ENCODE measurements at regions of chr4 and their contacts with region 1.

Region 1: GRCh38 chr4:182143822-182144625 is 99.2 kb upstream of the TENM3 start:
- DNase-seq: no peak
- H3K4me3 ChIP-seq: peak overlapping the region; percentile 59 to 84 (median 78)
- H3K27ac ChIP-seq: peak overlapping the region; percentile 60 to 73 (median 65)
- H3K4me1 ChIP-seq: peaks cover 2 to 23% (median 21%) of the 10 kb centered on the region in 4 donors
- H3K27me3 ChIP-seq: peaks cover 0 to 47% (median 39%) of the 10 kb centered on the region in 3 donors
- CTCF ChIP-seq: no peak
- EP300 ChIP-seq: no peak
- POLR2A ChIP-seq: no peak

Region 2: DNA sequence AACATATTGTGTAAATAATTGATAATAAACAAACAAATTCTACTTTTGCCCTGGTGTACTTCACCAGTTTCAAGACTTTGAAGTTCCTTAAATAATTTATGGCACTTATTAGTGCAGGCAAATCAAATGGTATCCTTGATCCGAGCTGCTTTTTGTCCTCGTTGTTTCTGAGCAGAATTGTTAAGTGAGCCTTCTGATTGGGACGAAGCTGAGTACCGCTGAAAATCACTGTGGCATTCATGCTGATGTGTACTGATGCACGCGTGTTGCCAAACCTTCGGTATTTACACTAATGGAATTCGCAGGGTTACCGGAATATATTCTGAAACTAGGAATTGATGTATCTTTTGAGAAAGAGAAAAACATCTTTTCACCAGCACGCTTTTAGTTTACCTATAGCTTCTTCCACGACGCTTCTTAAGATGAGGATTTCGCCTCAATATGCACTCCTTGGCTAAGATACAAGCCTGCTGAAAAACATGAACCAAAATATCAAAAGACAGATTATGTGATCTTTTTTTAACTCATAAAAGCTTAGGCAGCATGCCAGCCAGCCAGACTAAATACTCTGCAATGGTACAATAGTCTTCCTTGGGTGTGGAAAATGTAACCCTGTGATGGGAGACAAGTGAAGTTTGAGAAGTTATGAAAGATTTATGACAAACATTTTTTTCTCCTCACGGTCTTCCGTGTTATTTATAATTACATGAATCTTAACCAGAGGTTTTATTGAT is 50.2 kb after region 1 on chr4:
- intact Hi-C with region 1: no loop called
- DNase-seq: no peak
- H3K4me3 ChIP-seq: no peak overlapping the region
- H3K27ac ChIP-seq: no peak overlapping the region
- H3K4me1 ChIP-seq: no peaks in the 10 kb centered on the region
- H3K27me3 ChIP-seq: no peaks in the 10 kb centered on the region
- CTCF ChIP-seq: no peak
- EP300 ChIP-seq: no peak
- POLR2A ChIP-seq: no peak

Region 3: GRCh38 chr4:182207830-182208396 is 63.9 kb after region 1 on chr4:
- intact Hi-C with region 1: loop called (anchors 10 kb)
- DNase-seq: no peak
- H3K4me3 ChIP-seq: no peak overlapping the region
- H3K27ac ChIP-seq: peak overlapping the region; percentile 30 to 75 (median 68)
- H3K4me1 ChIP-seq: peaks cover 0 to 24% (median 15%) of the 10 kb centered on the region in 4 donors
- H3K27me3 ChIP-seq: no peaks in the 10 kb centered on the region
- CTCF ChIP-seq: no peak
- EP300 ChIP-seq: peak in 1 of 4 donors; percentile 34
- POLR2A ChIP-seq: no peak

Region 4: DNA sequence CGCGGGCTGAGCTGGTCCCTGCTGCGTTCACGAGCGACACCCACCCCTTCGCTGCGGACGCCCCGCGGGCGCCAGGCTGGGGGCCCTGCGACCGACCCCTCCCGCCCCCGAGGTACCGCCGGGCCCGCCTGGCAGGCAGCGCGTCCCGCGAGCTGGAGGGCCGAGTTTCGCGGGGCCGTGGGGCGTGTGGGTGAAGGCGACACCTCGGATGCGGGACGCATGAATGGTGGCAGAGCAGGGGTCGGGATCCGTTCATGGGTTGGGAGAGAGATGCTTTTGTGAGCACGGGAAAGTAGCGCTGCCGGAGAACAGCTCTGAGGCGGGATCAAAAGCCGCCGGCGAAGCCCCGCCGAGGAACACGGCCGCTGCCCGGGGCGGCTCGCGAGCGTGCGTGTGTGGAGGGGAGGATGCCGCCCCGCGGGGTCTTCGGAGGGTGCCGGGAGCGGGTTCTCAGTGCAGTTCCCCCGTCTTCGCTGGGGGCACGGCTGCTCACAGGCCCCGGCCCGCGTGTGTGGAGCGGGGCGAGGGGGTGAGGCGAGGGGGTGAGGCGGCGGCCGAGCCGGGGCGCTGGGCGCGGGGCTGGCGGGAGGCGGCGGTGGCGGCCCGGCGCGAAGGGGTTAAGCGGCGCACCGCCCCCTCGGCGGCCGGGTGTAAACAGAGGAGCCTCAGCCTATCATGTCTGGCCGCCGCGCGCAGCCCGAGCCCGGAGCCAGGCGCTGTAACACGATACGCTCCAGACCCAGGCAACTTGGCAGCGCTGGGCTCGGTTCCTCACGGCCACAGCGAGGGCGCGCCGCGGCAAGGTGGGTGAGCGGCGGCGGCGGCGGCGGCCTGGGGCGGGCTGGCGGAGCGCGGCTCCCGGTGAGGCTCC is 304.5 kb after region 1 on chr4:
- intact Hi-C with region 1: loop called (anchors 2 kb)
- DNase-seq: peak; percentile 98
- H3K4me3 ChIP-seq: peak overlapping the region; percentile 65 to 88 (median 76)
- H3K27ac ChIP-seq: peak overlapping the region; percentile 78 to 92 (median 88)
- H3K4me1 ChIP-seq: peaks cover 0 to 36% (median 21%) of the 10 kb centered on the region in 4 donors
- H3K27me3 ChIP-seq: peaks cover 0 to 13% (median 0%) of the 10 kb centered on the region in 3 donors
- CTCF ChIP-seq: no peak
- EP300 ChIP-seq: peak in 1 of 4 donors; percentile 14
- POLR2A ChIP-seq: no peak

Region 5: GRCh38 chr4:182629096-182629495 is 485.1 kb after region 1 on chr4:
- intact Hi-C with region 1: no loop called
- DNase-seq: no peak
- H3K4me3 ChIP-seq: no peak overlapping the region
- H3K27ac ChIP-seq: peak overlapping the region in 2 of 4 donors; percentile 67 to 75
- H3K4me1 ChIP-seq: peaks cover 0 to 16% (median 13%) of the 10 kb centered on the region in 4 donors
- H3K27me3 ChIP-seq: no peaks in the 10 kb centered on the region
- CTCF ChIP-seq: no peak
- EP300 ChIP-seq: no peak
- POLR2A ChIP-seq: no peak

Region 6: DNA sequence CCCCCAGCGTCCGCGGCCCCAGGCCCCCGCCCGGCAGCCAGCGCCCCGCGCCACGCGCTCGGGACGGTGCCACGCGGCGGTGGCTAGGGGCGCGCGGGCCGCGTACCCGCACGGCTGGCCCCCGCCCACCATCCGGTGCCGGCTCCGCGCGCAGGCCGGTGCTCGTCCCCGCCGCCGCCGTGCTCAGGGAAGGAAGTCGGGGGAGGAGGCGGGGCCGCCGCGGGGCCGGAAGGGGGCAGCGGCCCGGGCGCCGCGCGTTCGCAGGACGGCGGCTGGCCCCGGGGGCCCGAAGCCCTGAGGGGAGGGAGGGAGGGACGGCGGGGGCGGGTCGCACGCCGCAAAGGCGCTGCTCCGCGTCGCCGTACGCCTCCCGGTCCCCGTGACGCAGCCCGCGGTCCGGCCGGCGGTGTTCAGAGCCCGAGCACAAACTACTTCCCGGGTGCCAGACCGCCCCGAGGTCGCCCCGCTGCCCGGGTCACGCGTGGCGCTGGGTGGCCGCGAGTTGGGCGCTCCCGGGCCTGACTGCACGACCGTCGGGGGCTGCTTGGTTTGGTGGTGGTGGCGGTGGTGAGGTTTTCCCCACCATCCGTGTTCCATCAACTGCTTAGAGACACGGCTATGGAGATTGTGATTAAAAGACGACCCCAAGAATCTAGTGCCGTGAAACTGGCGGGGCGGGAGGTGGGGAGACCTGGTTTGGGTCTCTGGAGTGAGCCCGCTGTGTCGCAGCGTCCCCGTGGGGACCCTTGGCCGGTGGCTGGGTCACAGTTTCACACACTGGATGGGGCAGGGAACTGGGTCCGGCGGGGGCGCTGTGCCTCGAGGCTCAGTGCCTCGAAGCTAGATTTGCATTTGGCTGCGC is 773.4 kb after region 1 on chr4 and contains the start of gene DCTD:
- intact Hi-C with region 1: loop called (anchors 5 kb)
- DNase-seq: peak; percentile 86
- H3K4me3 ChIP-seq: peak within 1 kb of the TSS; percentile 71 to 92 (median 82)
- H3K27ac ChIP-seq: peak within 1 kb of the TSS; percentile 93 to 96 (median 94)
- H3K4me1 ChIP-seq: peaks cover 0 to 36% (median 14%) of the 10 kb centered on the region in 4 donors
- H3K27me3 ChIP-seq: no peaks in the 10 kb centered on the region
- CTCF ChIP-seq: peak in 1 of 4 experiments; percentile 8
- EP300 ChIP-seq: no peak
- POLR2A ChIP-seq: peak in 1 of 2 donors; percentile 13
- total RNA-seq, gene DCTD: 35.2 to 48.2 (median 40.9) TPM

Measured in sigmoid colon (tissue), 7 donors.